ENCODE measurements at regions of chr17 and their contacts with region 1.

Region 1: GRCh38 chr17:16027708-16028584 is 28.3 kb downstream of the TTC19 start:
- DNase-seq: peak; percentile 45 to 88
- H3K4me3 ChIP-seq: no peak overlapping the region
- H3K27ac ChIP-seq: peak overlapping the region; percentile 97
- H3K4me1 ChIP-seq: peaks cover 25% of the 10 kb centered on the region
- H3K27me3 ChIP-seq: no peaks in the 10 kb centered on the region
- CTCF ChIP-seq: no peak

Region 2: DNA sequence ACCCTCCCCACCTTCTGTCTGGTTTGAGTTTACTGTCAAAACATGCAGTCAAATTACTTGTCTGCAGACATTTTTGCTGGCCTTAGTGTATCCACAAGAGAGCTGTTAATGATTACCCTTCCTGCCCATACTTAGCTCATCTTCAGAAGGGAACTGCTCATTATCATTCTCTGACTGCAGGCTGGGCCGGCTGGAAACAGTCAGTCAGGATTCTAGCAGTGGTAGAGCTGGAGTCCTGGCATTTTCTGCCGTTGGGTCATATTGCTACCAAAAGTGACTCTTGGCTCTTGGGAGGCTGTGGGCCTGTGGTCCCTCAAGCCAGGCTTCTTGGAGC is 1266.9 kb before region 1 on chr17:
- CTCF ChIA-PET with region 1: no interaction called
- POLR2A ChIA-PET with region 1: no interaction called
- intact Hi-C with region 1: no loop called
- DNase-seq: no peak
- H3K4me3 ChIP-seq: no peak overlapping the region
- H3K27ac ChIP-seq: no peak overlapping the region
- H3K4me1 ChIP-seq: no peaks in the 10 kb centered on the region
- H3K27me3 ChIP-seq: no peaks in the 10 kb centered on the region
- CTCF ChIP-seq: no peak

Region 3: DNA sequence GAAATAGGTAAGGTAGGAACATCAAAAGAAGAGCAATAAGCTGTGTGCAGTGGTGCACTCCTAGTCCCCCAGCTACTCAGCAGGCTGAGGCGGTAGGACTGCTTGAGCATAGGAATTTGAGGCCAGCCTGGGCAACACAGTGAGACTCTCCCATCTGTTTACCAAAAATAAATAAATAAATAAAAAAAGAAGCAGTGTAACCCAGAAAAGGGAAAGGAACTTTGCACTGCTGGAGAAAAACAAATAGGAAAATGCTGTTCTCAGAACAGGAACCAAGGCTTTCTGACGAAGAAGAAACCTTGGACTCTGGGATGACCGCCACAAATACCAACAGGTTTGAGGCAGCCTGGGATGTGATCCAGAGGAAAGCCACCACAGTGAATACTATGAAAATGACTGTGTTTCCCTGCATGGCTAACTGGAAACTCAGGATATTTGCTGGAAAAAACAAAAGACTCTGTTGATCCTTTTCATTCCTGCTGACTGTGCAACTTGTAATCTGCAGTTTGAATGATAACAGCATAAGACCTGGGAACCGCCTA is 12.8 kb after region 1 on chr17:
- CTCF ChIA-PET with region 1: interaction called, 14 read pairs
- POLR2A ChIA-PET with region 1: interaction called, 4 read pairs
- intact Hi-C with region 1: no loop called
- DNase-seq: no peak
- H3K4me3 ChIP-seq: no peak overlapping the region
- H3K27ac ChIP-seq: no peak overlapping the region
- H3K4me1 ChIP-seq: no peaks in the 10 kb centered on the region
- H3K27me3 ChIP-seq: no peaks in the 10 kb centered on the region
- CTCF ChIP-seq: no peak

Region 4: DNA sequence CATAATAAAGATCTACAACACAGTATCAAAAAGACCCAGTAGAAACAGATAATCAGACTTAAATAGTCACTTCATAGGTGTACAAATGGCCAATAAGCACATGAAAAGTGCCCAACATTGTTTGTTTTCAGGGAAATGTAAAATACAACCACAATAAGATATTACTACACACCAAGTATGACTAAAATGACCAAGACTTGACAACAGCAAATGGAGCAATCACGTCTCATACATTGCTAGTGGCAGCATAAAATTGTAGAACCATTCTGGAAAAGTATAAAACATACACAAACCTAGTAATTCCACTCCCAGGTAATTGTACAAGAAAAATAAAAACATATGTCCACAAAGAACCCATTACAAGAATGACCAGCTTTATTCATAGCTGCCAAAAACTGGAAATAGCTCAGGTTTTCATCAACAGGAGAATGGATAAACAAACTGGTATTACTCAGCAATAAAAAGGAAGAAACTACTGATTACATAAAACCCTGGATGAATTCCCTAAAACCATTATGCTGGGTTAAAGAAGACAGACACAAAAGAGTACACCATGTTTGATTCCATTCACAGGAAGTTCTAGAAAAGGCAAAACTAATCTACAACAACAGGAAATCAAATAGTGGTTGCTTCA is 57.2 kb after region 1 on chr17:
- CTCF ChIA-PET with region 1: no interaction called
- POLR2A ChIA-PET with region 1: interaction called, 41 read pairs
- intact Hi-C with region 1: no loop called
- DNase-seq: no peak
- H3K4me3 ChIP-seq: no peak overlapping the region
- H3K27ac ChIP-seq: no peak overlapping the region
- H3K4me1 ChIP-seq: no peaks in the 10 kb centered on the region
- H3K27me3 ChIP-seq: no peaks in the 10 kb centered on the region
- CTCF ChIP-seq: no peak

Measured in PC-9 (cell line).